G401 (cell line): ENCODE measurements at regions of chr11 and their contacts with region 1.

Region 1: DNA sequence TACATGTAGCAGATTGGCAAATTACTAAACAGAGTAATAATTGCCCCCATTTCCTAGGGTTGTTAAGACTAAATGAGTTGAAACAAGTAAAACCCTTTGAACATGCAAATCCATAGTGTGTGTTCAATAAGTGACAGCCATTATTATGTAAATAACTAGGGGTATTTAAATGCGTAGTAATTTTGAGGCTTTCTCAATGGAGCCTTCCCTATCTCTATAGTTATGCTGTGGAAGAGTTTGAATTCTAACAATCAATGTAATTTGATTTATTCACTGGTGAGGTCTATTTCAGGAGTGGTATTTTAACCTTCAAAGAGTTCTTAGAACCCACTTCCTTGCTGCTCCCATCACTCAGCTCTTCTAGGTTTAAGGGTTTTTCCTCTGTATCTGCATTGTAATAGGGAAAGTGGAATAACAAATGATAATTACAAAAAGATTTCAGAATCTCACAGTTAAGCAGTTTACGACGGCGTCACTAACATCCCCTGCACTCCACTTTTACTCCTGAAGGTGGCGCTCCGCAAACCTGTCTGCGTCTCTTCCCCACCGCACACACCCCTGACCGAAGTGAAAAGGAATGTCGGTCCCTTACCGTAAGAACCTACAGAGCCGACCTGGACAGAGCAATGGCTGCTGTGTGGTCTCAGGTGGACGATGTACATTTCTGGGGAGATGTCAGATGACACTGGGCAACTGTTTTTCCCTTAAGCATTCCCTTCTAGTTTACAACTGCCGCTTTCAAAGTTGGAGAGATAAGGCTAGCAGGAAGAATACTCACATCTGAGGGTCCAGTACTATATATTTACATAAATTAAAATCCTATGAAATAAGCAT is 80.8 kb downstream of the ZC3H12C start:
- DNase-seq: peak; percentile 35

Region 2: GRCh38 chr11:110362971-110363509 is 189.0 kb after region 1 on chr11:
- in situ Hi-C with region 1: loop called (anchors 10 kb)
- DNase-seq: no peak